ENCODE measurements at regions of chr16 and their contacts with region 1.

Region 1: GRCh38 chr16:85086347-85087291 is 25.7 kb downstream of the CIBAR2 start:
- H3K4me3 Mint-ChIP-seq: no peak overlapping the region
- H3K27ac Mint-ChIP-seq: no peak overlapping the region
- H3K4me1 Mint-ChIP-seq: peaks cover 64% of the 10 kb centered on the region
- H3K27me3 Mint-ChIP-seq: peaks cover 7% of the 10 kb centered on the region

Region 2: DNA sequence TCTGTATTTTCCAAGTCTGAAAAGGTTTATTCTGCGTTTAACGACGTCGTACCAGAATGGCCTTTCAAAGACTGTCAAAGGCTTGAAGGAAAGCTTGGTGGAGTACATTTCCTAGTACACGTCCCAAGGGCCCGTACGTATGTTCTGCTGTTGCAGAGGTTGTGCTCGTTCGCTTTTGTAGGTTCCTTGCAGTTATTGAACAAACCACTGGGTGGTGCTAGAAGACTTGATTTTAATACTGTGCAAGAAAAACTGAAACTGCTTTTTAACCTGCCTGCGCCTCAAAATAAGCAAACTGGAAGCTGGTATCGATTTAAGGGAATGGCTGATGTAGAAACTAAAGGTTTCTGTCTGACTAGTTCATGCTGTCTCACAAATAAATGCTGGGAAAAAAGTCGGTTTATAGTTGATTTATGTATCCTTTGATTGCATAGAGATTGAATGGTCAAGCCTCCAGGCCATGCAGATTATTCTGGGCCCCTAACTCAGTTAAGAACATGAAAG is 332.2 kb before region 1 on chr16:
- intact Hi-C with region 1: loop called (anchors 10 kb)
- H3K4me3 Mint-ChIP-seq: peak overlapping the region; percentile 53
- H3K27ac Mint-ChIP-seq: peak overlapping the region; percentile 62
- H3K4me1 Mint-ChIP-seq: peaks cover 72% of the 10 kb centered on the region
- H3K27me3 Mint-ChIP-seq: no peaks in the 10 kb centered on the region

Region 3: GRCh38 chr16:84985079-84986065 is 101.2 kb before region 1 on chr16:
- intact Hi-C with region 1: loop called (anchors 5 kb)
- H3K4me3 Mint-ChIP-seq: no peak overlapping the region
- H3K27ac Mint-ChIP-seq: peak overlapping the region; percentile 89
- H3K4me1 Mint-ChIP-seq: peaks cover 89% of the 10 kb centered on the region
- H3K27me3 Mint-ChIP-seq: no peaks in the 10 kb centered on the region

Region 4: GRCh38 chr16:85027349-85027957 is 59.2 kb before region 1 on chr16 and contains the start of gene KIAA0513:
- intact Hi-C with region 1: loop called (anchors 10 kb)
- H3K4me3 Mint-ChIP-seq: peak within 1 kb of the TSS; percentile 98
- H3K27ac Mint-ChIP-seq: peak within 1 kb of the TSS; percentile 99
- H3K4me1 Mint-ChIP-seq: peaks cover 65% of the 10 kb centered on the region
- H3K27me3 Mint-ChIP-seq: no peaks in the 10 kb centered on the region

Region 5: GRCh38 chr16:85046931-85047866 is 39.4 kb before region 1 on chr16:
- intact Hi-C with region 1: loop called (anchors 5 kb)
- H3K4me3 Mint-ChIP-seq: no peak overlapping the region
- H3K27ac Mint-ChIP-seq: peak overlapping the region; percentile 64
- H3K4me1 Mint-ChIP-seq: peaks cover 65% of the 10 kb centered on the region
- H3K27me3 Mint-ChIP-seq: no peaks in the 10 kb centered on the region

Region 6: DNA sequence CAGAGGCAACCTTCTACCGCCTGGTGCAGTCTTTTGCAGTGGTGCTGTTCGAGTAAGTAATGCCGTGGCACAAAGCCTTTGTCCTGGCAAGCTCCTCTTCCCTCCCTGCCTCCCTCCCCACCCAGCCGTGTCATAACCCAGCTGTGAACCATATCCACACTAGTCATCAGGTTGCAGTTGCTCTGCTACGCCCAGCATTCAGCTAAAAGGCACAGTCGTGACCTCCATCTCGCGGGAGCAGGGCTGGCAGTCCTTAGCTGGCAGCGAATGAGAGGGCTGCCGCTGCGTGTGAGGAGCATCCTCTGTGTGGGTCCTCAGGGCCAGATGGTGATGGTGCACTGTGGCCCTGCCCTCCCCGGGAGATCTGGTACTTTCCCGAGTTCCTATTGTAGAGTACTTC is 13.7 kb before region 1 on chr16:
- intact Hi-C with region 1: no loop called
- H3K4me3 Mint-ChIP-seq: no peak overlapping the region
- H3K27ac Mint-ChIP-seq: no peak overlapping the region
- H3K4me1 Mint-ChIP-seq: peaks cover 44% of the 10 kb centered on the region
- H3K27me3 Mint-ChIP-seq: peaks cover 4% of the 10 kb centered on the region

Region 7: GRCh38 chr16:85316321-85316919 is 229.8 kb after region 1 on chr16:
- intact Hi-C with region 1: no loop called
- H3K4me3 Mint-ChIP-seq: no peak overlapping the region
- H3K27ac Mint-ChIP-seq: no peak overlapping the region
- H3K4me1 Mint-ChIP-seq: peaks cover 21% of the 10 kb centered on the region
- H3K27me3 Mint-ChIP-seq: peaks cover 46% of the 10 kb centered on the region